ENCODE measurements at regions of chr6 and their contacts with region 1.

Region 1: GRCh38 chr6:157885211-157885788 is 62.3 kb downstream of the SNX9 start:
- DNase-seq: peak; percentile 88
- H3K4me3 Mint-ChIP-seq: peak overlapping the region; percentile 50
- H3K27ac Mint-ChIP-seq: peak overlapping the region; percentile 97
- H3K4me1 Mint-ChIP-seq: peaks cover 79% of the 10 kb centered on the region
- H3K27me3 Mint-ChIP-seq: no peaks in the 10 kb centered on the region

Region 2: GRCh38 chr6:157756708-157757429 is 128.4 kb before region 1 on chr6:
- CTCF ChIA-PET with region 1: interaction called, 142 read pairs
- intact Hi-C with region 1: loop called (anchors 1 kb)
- DNase-seq: peak; percentile 94
- H3K4me3 Mint-ChIP-seq: peak overlapping the region; percentile 28
- H3K27ac Mint-ChIP-seq: peak overlapping the region; percentile 89
- H3K4me1 Mint-ChIP-seq: peaks cover 93% of the 10 kb centered on the region
- H3K27me3 Mint-ChIP-seq: no peaks in the 10 kb centered on the region

Region 3: GRCh38 chr6:157823528-157824370 is 61.6 kb before region 1 on chr6:
- CTCF ChIA-PET with region 1: interaction called, 3 read pairs
- intact Hi-C with region 1: loop called (anchors 1 kb)
- DNase-seq: peak; percentile 96
- H3K4me3 Mint-ChIP-seq: peak overlapping the region; percentile 80
- H3K27ac Mint-ChIP-seq: peak overlapping the region; percentile 96
- H3K4me1 Mint-ChIP-seq: peaks cover 42% of the 10 kb centered on the region
- H3K27me3 Mint-ChIP-seq: peaks cover 4% of the 10 kb centered on the region

Region 4: GRCh38 chr6:157841211-157841840 is 44.0 kb before region 1 on chr6:
- CTCF ChIA-PET with region 1: no interaction called
- intact Hi-C with region 1: loop called (anchors 2 kb)
- DNase-seq: peak; percentile 36
- H3K4me3 Mint-ChIP-seq: no peak overlapping the region
- H3K27ac Mint-ChIP-seq: peak overlapping the region; percentile 59
- H3K4me1 Mint-ChIP-seq: peaks cover 84% of the 10 kb centered on the region
- H3K27me3 Mint-ChIP-seq: no peaks in the 10 kb centered on the region

Region 5: DNA sequence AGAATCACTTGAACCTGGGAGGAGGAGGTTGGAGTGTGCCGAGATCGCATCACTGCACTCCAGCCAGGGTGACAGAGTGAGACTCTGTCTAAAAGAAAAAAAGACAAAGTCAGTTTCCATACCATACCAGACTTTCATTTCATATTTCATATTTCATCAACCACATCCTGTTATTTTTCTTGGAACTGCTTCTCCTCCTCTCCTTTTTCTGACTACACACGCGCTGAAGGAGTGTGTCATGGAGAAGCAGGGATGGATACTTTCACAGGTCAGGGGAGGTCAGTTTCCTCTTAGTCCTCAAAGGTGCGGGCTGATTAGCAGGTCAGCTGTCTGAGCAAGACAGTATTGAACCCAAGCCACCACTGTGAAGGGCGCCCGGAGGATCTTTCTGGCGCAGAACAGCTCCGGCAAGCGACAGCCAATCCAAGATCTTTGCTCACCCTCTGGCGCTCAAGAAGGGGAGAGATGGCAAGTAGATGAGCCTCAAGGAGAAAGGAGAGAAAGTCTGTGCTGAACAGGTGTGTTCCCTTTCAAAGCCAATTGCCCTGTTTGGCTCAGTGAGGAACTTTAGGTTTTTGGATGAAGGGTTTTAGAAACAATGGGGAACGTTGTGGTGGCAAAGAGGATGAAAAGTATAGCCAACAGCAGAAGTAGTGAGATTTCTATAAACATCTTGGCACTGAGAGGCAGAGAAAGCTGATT is 77.5 kb after region 1 on chr6:
- CTCF ChIA-PET with region 1: no interaction called
- intact Hi-C with region 1: loop called (anchors 2 kb)
- DNase-seq: peak; percentile 55
- H3K4me3 Mint-ChIP-seq: peak overlapping the region; percentile 65
- H3K27ac Mint-ChIP-seq: peak overlapping the region; percentile 89
- H3K4me1 Mint-ChIP-seq: peaks cover 21% of the 10 kb centered on the region
- H3K27me3 Mint-ChIP-seq: no peaks in the 10 kb centered on the region

Measured in activated naive CD4-positive, alpha-beta T cell treated with anti-CD3 and anti-CD28 coated beads for 36 hours (primary cell).